Activated naive CD4-positive, alpha-beta T cell treated with anti-CD3 and anti-CD28 coated beads for 36 hours (primary cell): ENCODE measurements at regions of chr4 and their contacts with region 1.

Region 1: DNA sequence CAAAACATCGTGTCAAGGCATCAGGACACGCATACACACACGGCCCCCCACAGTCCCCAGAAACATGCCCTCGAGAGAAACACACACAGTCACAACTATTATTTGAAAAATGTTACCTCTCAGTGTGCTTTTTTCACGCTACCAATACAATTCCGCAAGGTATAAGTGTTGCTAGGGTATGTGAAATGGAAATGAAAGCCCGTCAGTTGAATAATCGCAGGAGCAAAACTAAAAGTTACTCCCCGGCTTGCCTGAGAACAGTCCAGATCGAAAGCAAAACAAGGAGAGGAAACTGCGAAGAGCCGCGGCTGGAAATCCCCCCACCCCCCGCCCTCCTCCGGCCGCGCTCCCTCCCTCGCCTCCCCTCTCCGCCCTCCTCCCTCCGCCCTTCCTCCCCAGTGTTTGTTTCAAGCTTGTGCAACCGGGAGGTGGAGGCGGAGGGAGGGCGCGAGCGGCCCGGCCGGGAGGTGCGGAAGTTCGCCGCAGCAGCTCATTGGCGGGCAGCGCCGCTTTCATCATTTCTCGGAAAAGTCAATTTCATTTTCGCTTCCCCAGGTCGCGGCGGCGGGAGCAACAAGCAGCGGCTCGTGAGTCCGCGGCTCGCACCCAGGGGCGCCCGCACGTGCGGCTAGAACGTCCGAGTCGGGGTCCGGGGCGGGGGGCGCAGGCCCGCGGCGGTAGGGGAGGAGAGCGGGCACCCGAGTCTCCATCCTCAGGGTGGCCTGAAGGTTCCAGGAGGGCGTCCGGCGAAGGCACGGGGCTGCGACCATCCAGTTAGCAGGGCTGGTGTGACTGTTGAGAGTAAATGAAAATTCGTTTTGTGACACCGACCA is at the start of gene IRF2:
- DNase-seq: peak; percentile 99
- H3K4me3 Mint-ChIP-seq: peak within 1 kb of the TSS; percentile 98
- H3K27ac Mint-ChIP-seq: peak within 1 kb of the TSS; percentile 100
- H3K4me1 Mint-ChIP-seq: peaks cover 49% of the 10 kb centered on the region
- H3K27me3 Mint-ChIP-seq: no peaks in the 10 kb centered on the region
- total RNA-seq, gene IRF2: 37.3 to 38.3 TPM

Region 2: DNA sequence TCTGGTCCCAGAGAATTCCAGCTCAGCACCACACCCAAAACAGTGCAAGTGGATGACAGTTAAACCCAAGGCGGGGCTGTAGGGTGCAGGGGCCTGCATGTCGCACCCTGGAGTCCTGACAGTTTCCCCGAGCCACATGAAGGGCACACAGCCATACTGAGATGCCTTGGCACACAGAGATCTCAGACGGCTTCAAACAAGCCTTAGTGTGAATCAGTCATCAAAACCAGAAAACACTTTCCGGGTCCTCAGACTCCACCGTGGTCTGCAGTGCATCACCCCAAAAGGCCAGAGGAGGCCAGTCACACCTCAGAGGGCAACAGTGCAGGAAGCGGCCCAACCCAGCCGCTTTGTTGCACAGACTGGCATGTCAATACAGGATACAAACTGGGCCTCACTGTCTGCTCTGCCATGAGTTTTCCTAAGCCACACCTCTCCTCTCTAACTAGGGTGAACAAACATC is 192.2 kb before region 1 on chr4:
- CTCF ChIA-PET with region 1: interaction called, 6 read pairs
- intact Hi-C with region 1: loop called (anchors 1 kb)
- DNase-seq: peak; percentile 82
- H3K4me3 Mint-ChIP-seq: no peak overlapping the region
- H3K27ac Mint-ChIP-seq: peak overlapping the region; percentile 85
- H3K4me1 Mint-ChIP-seq: peaks cover 64% of the 10 kb centered on the region
- H3K27me3 Mint-ChIP-seq: peaks cover 4% of the 10 kb centered on the region

Region 3: GRCh38 chr4:184329659-184330400 is 144.6 kb before region 1 on chr4:
- CTCF ChIA-PET with region 1: no interaction called
- intact Hi-C with region 1: loop called (anchors 1 kb)
- DNase-seq: no peak
- H3K4me3 Mint-ChIP-seq: no peak overlapping the region
- H3K27ac Mint-ChIP-seq: no peak overlapping the region
- H3K4me1 Mint-ChIP-seq: peaks cover 27% of the 10 kb centered on the region
- H3K27me3 Mint-ChIP-seq: no peaks in the 10 kb centered on the region

Region 4: GRCh38 chr4:184459413-184459812 is 15.1 kb before region 1 on chr4:
- CTCF ChIA-PET with region 1: no interaction called
- intact Hi-C with region 1: loop called (anchors 1 kb)
- DNase-seq: no peak
- H3K4me3 Mint-ChIP-seq: no peak overlapping the region
- H3K27ac Mint-ChIP-seq: peak overlapping the region; percentile 14
- H3K4me1 Mint-ChIP-seq: peaks cover 72% of the 10 kb centered on the region
- H3K27me3 Mint-ChIP-seq: no peaks in the 10 kb centered on the region

Region 5: DNA sequence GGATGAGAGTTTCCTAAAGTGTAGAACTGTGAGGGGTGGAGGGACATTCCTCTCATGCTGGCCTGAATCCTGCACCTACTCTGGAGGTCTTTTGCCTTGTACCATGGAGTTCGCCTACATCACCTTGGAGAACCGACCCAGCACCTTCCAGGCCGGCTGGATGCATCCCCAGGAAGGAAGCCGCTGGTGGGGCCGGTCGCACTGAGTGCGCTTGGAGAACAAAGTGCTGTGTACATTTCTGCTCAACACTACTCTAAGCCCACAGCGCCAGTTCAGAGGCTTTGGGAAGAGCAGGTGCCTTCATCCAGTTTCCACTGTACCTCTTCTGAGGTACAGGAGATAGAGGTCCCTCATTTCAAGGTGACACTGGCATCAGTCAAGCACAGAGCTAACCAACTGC is 15.3 kb after region 1 on chr4:
- CTCF ChIA-PET with region 1: no interaction called
- intact Hi-C with region 1: no loop called
- DNase-seq: no peak
- H3K4me3 Mint-ChIP-seq: no peak overlapping the region
- H3K27ac Mint-ChIP-seq: no peak overlapping the region
- H3K4me1 Mint-ChIP-seq: no peaks in the 10 kb centered on the region
- H3K27me3 Mint-ChIP-seq: peaks cover 3% of the 10 kb centered on the region

Region 6: GRCh38 chr4:184583738-184584502 is 109.4 kb after region 1 on chr4:
- CTCF ChIA-PET with region 1: interaction called, 3 read pairs
- intact Hi-C with region 1: loop called (anchors 2 kb)
- DNase-seq: peak; percentile 62
- H3K4me3 Mint-ChIP-seq: no peak overlapping the region
- H3K27ac Mint-ChIP-seq: peak overlapping the region; percentile 20
- H3K4me1 Mint-ChIP-seq: peaks cover 25% of the 10 kb centered on the region
- H3K27me3 Mint-ChIP-seq: no peaks in the 10 kb centered on the region

Region 7: GRCh38 chr4:185203486-185204237 is 729.2 kb after region 1 on chr4 and contains the start of gene CFAP97:
- CTCF ChIA-PET with region 1: no interaction called
- intact Hi-C with region 1: loop called (anchors 10 kb)
- DNase-seq: peak; percentile 73
- H3K4me3 Mint-ChIP-seq: peak within 1 kb of the TSS; percentile 96
- H3K27ac Mint-ChIP-seq: peak within 1 kb of the TSS; percentile 96
- H3K4me1 Mint-ChIP-seq: peaks cover 32% of the 10 kb centered on the region
- H3K27me3 Mint-ChIP-seq: no peaks in the 10 kb centered on the region
- total RNA-seq, gene CFAP97: 38.4 to 43.6 TPM